ENCODE measurements at regions of chr9 and their contacts with region 1.

Region 1: GRCh38 chr9:36487482-36488388 is 85.0 kb upstream of the MELK start:
- DNase-seq: peak; percentile 93
- H3K4me3 Mint-ChIP-seq: peak overlapping the region; percentile 85
- H3K27ac Mint-ChIP-seq: peak overlapping the region; percentile 97
- H3K4me1 Mint-ChIP-seq: peaks cover 61% of the 10 kb centered on the region
- H3K27me3 Mint-ChIP-seq: no peaks in the 10 kb centered on the region

Region 2: DNA sequence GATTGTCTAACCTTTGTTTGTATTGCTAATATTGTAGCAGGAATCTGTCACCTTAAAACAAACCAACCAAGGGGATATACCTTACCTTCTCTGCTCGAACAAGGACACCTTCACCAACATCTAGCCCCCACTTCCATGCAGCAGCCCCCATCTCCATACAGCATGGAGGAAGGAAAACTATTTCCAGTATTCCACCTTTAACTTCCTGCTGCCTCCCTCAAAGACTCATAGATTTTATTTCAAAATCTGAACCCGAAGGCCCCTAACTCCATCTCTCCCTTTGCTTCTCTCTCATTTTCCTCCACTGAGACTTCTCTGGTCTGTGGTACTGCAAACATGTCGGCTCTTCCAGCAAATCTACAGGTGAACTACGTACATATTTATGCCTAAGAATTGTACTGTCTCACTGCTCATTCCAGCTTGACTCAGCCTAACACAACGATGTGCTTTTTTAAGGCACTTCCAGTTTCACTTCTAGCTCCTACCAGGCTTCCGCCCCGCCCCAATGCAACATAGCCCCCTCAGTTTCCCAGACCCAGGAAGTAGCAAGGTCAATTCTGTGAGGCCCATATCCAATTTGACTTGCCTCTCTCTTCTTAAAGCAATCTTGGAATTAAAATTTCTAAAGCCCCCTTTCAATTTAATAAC is 17.0 kb before region 1 on chr9:
- CTCF ChIA-PET with region 1: interaction called, 5 read pairs
- POLR2A ChIA-PET with region 1: interaction called, 5 read pairs
- intact Hi-C with region 1: loop called (anchors 2 kb)
- DNase-seq: peak; percentile 81
- H3K4me3 Mint-ChIP-seq: peak overlapping the region; percentile 67
- H3K27ac Mint-ChIP-seq: peak overlapping the region; percentile 92
- H3K4me1 Mint-ChIP-seq: peaks cover 32% of the 10 kb centered on the region
- H3K27me3 Mint-ChIP-seq: no peaks in the 10 kb centered on the region